Endothelial cell of umbilical vein (primary cell): ENCODE measurements at regions of chr3 and their contacts with region 1.

Region 1: GRCh38 chr3:37114251-37115145 is 59.9 kb downstream of the LRRFIP2 start:
- DNase-seq: peak; percentile 82
- H3K4me3 ChIP-seq: no peak overlapping the region
- H3K27ac ChIP-seq: peak overlapping the region; percentile 48
- H3K4me1 ChIP-seq: peaks cover 19% of the 10 kb centered on the region
- H3K27me3 ChIP-seq: no peaks in the 10 kb centered on the region
- CTCF ChIP-seq: no peak
- POLR2A ChIP-seq: no peak

Region 2: GRCh38 chr3:37096288-37096687 is 18.2 kb before region 1 on chr3:
- CTCF ChIA-PET with region 1: interaction called, 5 read pairs
- POLR2A ChIA-PET with region 1: interaction called, 3 read pairs
- dilution Hi-C with region 1: no loop called
- intact Hi-C with region 1: loop called (anchors 1 kb)
- DNase-seq: peak; percentile 76
- H3K4me3 ChIP-seq: no peak overlapping the region
- H3K27ac ChIP-seq: peak overlapping the region; percentile 55
- H3K4me1 ChIP-seq: peaks cover 37% of the 10 kb centered on the region
- H3K27me3 ChIP-seq: no peaks in the 10 kb centered on the region
- CTCF ChIP-seq: no peak
- POLR2A ChIP-seq: no peak